Body of pancreas (tissue), 4 donors: ENCODE measurements at regions of chr11 and their contacts with region 1.

Region 1: GRCh38 chr11:130131961-130132850 is 27.4 kb upstream of the ST14 start:
- DNase-seq: peak; percentile 47 to 68 (median 62)
- ATAC-seq: peak; percentile 87
- H3K4me3 ChIP-seq: no peak overlapping the region
- H3K27ac ChIP-seq: no peak overlapping the region
- H3K4me1 ChIP-seq: no peaks in the 10 kb centered on the region
- H3K27me3 ChIP-seq: no peaks in the 10 kb centered on the region
- CTCF ChIP-seq: peak; percentile 59 to 93 (median 88)
- POLR2A ChIP-seq: no peak

Region 2: DNA sequence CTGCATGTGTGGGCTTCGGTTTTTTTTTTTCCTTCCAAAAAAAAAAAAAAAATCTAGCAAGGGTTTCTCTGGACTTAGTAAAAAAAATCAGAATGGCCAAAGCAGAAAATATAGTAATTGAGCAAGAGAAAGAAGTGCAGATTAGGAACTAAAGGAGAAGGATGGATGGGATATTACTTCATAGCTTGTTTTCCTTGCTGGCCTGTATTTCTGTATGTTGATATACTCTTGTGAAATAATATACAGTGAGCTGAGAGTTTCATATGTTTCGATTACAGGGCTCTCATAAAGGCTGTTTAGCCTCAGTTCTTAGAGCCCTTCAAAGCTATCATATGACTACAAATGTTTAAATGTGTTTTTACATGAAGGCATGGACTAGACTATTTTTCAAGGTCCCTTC is 202.5 kb before region 1 on chr11:
- intact Hi-C with region 1: loop called (anchors 5 kb)
- DNase-seq: no peak
- ATAC-seq: no peak
- H3K4me3 ChIP-seq: no peak overlapping the region
- H3K27ac ChIP-seq: no peak overlapping the region
- H3K4me1 ChIP-seq: no peaks in the 10 kb centered on the region
- H3K27me3 ChIP-seq: no peaks in the 10 kb centered on the region
- CTCF ChIP-seq: no peak
- POLR2A ChIP-seq: no peak